ENCODE measurements at regions of chr13 and their contacts with region 1.

Region 1: DNA sequence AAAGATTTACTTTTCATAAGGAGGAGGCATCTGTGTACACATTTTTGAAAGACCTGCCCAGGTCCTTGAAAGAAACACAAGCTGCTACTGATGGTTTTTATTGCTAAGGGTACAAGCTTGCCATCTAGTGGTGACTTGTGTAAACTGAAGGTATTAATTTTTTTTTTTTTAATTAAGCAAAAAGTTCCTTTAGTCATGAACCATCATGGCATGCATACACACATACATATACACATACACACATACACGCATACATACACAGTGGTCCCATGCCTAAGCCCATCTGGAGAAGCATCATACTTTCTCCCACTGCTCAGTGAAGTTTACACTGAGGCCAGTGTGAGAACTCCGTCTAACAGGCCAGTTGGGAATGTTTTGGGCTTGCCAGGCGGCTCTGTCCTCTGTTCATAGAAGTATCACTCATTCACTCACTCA is 312.5 kb downstream of the DCLK1 start:
- DNase-seq: peak; percentile 44
- ATAC-seq: peak; percentile 51; the same call in 1 of the 2 replicates
- H3K4me3 ChIP-seq: no peak overlapping the region
- H3K27ac ChIP-seq: no peak overlapping the region
- H3K4me1 ChIP-seq: no peaks in the 10 kb centered on the region
- H3K27me3 ChIP-seq: 0 out of 2 replicates have a peak, but pooled peaks cover 7% of the 10 kb centered on the region
- CTCF ChIP-seq: peak; percentile 62

Region 2: DNA sequence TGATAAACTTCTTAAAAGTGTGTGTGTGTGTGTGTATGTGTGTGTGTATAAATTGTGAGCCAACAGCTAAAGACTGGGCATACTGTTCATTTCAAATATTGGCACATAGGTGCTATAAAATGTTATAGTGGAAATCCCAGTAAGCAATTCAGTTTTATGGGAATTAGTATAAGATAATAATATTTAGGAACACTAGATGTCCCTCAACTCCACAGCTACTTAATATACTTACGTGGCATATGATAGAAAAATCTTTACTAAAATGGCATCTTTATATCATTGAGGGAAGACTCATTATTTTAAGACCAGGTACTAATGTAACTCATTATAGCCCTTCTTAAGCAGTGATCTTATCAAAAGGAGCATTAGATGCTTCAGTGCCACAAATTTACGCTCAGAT is 608.4 kb before region 1 on chr13:
- CTCF ChIA-PET with region 1: no interaction called
- POLR2A ChIA-PET with region 1: no interaction called
- intact Hi-C with region 1: loop called (anchors 10 kb)
- DNase-seq: peak; percentile 11
- ATAC-seq: peak; percentile 43; the same call in 1 of the 2 replicates
- H3K4me3 ChIP-seq: no peak overlapping the region
- H3K27ac ChIP-seq: no peak overlapping the region
- H3K4me1 ChIP-seq: no peaks in the 10 kb centered on the region
- H3K27me3 ChIP-seq: no peaks in the 10 kb centered on the region
- CTCF ChIP-seq: peak; percentile 44

Region 3: DNA sequence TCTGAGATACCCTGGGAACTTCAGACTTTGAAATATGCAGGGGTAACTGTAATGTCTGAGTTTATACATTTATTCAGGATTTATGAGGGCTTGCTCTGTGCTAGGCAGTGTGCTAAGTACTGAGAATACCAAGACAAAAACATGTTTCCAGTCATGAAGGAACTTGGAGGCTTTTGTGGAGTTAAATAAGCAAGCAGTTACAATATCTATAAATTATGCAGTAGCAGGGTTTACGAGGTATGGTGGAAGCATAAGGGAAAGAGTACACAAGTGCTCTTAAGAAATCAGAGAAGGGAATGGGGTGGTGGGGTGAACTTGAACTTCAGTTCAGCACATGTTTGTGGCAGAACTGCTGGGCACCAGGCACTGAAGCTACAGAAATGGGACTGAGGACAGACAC is 370.2 kb before region 1 on chr13:
- CTCF ChIA-PET with region 1: no interaction called
- POLR2A ChIA-PET with region 1: no interaction called
- intact Hi-C with region 1: no loop called
- DNase-seq: no peak
- ATAC-seq: no peak
- H3K4me3 ChIP-seq: no peak overlapping the region
- H3K27ac ChIP-seq: no peak overlapping the region
- H3K4me1 ChIP-seq: no peaks in the 10 kb centered on the region
- H3K27me3 ChIP-seq: no peaks in the 10 kb centered on the region
- CTCF ChIP-seq: no peak

Measured in PC-3 (cell line).